ENCODE measurements at regions of chr1 and their contacts with region 1.

Region 1: GRCh38 chr1:179365320-179366092 is at the start of gene AXDND1:
- DNase-seq: peak; percentile 54 to 93
- H3K4me3 ChIP-seq: peak within 1 kb of the TSS; percentile 62 to 70
- H3K27ac ChIP-seq: peak within 1 kb of the TSS; percentile 84 to 95
- H3K4me1 ChIP-seq: peaks cover 0 to 6% of the 10 kb centered on the region in 2 donors
- H3K27me3 ChIP-seq: no peaks in the 10 kb centered on the region
- CTCF ChIP-seq: no peak
- total RNA-seq, gene AXDND1: not detected

Region 2: DNA sequence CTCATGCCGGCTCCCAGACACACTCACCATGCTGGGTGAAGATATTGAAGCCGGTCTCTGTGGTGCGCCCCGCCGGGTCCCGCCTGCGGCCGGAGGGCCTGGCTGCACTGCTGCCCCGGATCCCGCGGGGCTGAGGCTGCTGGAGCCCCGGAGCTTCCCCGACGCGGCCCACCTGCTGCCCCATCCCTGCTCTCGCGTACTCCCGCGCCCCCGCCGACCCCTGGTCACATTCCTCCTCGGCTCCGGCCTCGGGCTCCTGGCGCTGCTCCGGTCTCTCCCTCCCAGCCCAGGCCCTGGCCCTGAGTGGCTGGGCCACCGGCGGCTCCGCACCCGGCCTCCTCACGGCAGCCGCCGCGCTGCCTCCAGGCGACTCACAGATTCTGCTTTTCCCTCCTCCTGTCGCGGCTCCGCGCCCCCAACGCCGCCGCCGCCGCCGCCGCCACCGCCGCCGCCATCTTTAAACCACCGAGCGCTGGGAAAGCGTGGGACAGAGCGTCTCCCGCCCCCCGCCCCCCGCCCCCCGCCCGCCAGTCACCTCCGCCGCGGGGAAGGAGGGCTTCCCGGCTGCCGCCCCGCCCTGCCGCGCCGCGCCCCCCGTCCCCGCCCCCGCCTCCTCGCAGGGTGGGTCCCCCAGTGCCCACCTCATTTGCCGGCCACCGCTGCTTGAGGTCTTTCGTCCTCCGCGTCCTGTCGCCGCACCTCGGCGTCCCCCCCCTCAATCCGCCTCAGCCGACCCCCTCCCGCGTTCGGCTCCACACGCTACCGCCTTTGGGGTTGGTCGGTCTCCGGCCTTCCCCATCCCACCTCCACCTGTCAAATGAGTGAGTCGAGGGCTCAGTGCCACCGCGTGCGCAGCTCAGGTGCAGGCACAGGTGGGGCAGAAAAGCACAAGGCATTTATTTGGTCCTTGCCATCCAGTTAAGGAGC is 136.0 kb before region 1 on chr1 and contains the start of gene ABL2:
- intact Hi-C with region 1: loop called (anchors 5 kb)
- DNase-seq: peak in 1 of 2 donors; percentile 69
- H3K4me3 ChIP-seq: peak within 1 kb of the TSS; percentile 95 to 100
- H3K27ac ChIP-seq: peak within 1 kb of the TSS; percentile 87 to 95
- H3K4me1 ChIP-seq: peaks cover 0 to 20% of the 10 kb centered on the region in 2 donors
- H3K27me3 ChIP-seq: no peaks in the 10 kb centered on the region
- CTCF ChIP-seq: no peak
- total RNA-seq, gene ABL2: 23.9 TPM

Region 3: GRCh38 chr1:179353546-179353945 is 12.0 kb before region 1 on chr1:
- intact Hi-C with region 1: loop called (anchors 2 kb)
- DNase-seq: peak in 1 of 2 donors; percentile 74
- H3K4me3 ChIP-seq: no peak overlapping the region
- H3K27ac ChIP-seq: peak overlapping the region; percentile 17 to 47
- H3K4me1 ChIP-seq: peaks cover 0 to 9% of the 10 kb centered on the region in 2 donors
- H3K27me3 ChIP-seq: no peaks in the 10 kb centered on the region
- CTCF ChIP-seq: no peak